ENCODE measurements at regions of chr1 and their contacts with region 1.

Region 1: GRCh38 chr1:107378527-107379270 is 237.9 kb downstream of the NTNG1 start:
- DNase-seq: no peak
- ATAC-seq: no peak
- H3K4me3 ChIP-seq: no peak overlapping the region
- H3K4me3 Mint-ChIP-seq: no peak overlapping the region
- H3K27ac ChIP-seq: no peak overlapping the region
- H3K27ac Mint-ChIP-seq: no peak overlapping the region
- H3K4me1 ChIP-seq: no peaks in the 10 kb centered on the region
- H3K4me1 Mint-ChIP-seq: no peaks in the 10 kb centered on the region
- H3K27me3 ChIP-seq: peaks cover 0 to 3% of the 10 kb centered on the region in 2 experiments
- H3K27me3 Mint-ChIP-seq: peaks cover 3 to 14% of the 10 kb centered on the region in 2 donors

Region 2: DNA sequence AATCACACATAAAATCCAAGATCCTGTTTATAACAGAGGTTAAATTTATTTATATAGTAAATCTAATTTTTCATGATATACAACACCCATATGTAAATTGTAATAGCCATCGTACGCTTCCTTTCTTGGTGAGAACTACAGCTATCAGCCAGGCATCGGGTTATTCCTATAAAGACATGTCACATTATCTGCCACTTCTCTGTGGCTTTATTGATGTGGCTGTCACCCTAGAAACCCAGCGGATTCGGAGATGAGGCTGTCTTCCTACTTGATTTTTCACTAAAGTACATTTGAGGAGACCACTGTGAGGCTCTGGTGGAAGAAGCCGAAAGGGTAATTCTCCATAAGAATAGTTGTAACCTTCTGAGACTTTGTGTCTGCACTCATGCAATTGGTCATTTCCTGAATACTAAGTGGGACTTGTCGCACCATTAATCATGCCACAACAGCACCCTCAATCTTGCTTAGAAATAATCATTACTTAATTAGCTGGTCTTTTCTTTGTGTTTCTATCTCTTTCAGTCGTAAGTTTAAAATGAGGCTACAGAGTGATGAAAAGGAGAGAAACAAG is 131.8 kb before region 1 on chr1:
- CTCF ChIA-PET with region 1: no interaction called
- POLR2A ChIA-PET with region 1: no interaction called
- DNase-seq: no peak
- ATAC-seq: no peak
- H3K4me3 ChIP-seq: no peak overlapping the region
- H3K4me3 Mint-ChIP-seq: no peak overlapping the region
- H3K27ac ChIP-seq: no peak overlapping the region
- H3K27ac Mint-ChIP-seq: no peak overlapping the region
- H3K4me1 ChIP-seq: peaks cover 0 to 7% of the 10 kb centered on the region in 2 experiments
- H3K4me1 Mint-ChIP-seq: peaks cover 0 to 6% (median 2%) of the 10 kb centered on the region in 3 donors
- H3K27me3 ChIP-seq: peaks cover 0 to 5% of the 10 kb centered on the region in 2 experiments
- H3K27me3 Mint-ChIP-seq: peaks cover 3 to 4% of the 10 kb centered on the region in 2 donors

Region 3: DNA sequence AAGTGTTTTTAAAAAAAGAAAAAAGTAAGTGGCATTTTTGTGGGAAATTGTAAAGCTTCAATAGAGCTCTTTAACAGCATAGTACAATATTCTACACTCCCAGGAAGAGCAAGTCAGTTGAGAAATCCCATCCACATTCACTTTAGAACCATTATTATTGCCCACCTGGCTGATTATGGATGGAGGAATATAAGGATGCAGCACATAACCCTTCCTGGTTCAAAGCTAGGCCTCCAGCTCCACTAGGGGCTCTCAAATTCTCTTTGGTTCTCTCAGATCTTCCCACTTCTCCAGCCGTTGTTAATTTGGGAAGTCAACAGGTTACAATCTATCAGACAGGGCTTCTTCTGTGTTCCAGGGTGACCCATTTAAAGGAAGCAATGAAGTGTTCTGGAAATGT is 39.8 kb before region 1 on chr1:
- CTCF ChIA-PET with region 1: no interaction called
- POLR2A ChIA-PET with region 1: interaction called in 1 of 2 experiments, 13 read pairs
- DNase-seq: no peak
- ATAC-seq: no peak
- H3K4me3 ChIP-seq: no peak overlapping the region
- H3K4me3 Mint-ChIP-seq: no peak overlapping the region
- H3K27ac ChIP-seq: no peak overlapping the region
- H3K27ac Mint-ChIP-seq: no peak overlapping the region
- H3K4me1 ChIP-seq: no peaks in the 10 kb centered on the region
- H3K4me1 Mint-ChIP-seq: no peaks in the 10 kb centered on the region
- H3K27me3 ChIP-seq: no peaks in the 10 kb centered on the region
- H3K27me3 Mint-ChIP-seq: peaks cover 2 to 4% of the 10 kb centered on the region in 2 donors

Region 4: DNA sequence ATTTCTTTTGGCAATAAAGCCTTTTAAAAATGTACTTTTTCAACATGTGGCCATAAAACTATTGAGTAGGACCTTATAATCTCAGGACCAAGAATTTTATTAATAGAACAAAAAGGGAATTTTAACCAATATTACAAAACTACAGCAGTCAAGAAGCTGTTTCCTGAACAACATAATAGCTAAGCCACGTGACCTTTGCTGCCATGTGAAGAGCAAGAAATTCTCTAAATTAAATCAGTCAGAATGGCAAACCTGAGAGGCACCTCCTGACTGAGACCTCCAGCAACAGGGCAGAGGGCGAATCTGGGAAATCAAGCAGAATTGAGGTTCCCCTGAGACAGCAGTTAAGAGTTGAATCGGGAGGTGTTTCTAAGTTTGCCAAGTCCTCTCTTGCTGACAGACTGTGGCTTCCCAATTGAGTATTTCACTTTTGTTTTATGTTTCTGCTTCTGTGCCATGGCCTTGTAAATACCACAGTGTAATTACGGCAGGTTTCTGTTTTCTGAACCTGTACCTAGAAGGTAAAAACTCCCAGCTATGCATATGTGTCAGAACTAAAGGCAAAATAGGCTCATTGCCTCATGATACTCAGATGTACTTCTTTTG is 120.5 kb after region 1 on chr1:
- CTCF ChIA-PET with region 1: no interaction called
- POLR2A ChIA-PET with region 1: no interaction called
- DNase-seq: no peak
- ATAC-seq: no peak
- H3K4me3 ChIP-seq: no peak overlapping the region
- H3K4me3 Mint-ChIP-seq: no peak overlapping the region
- H3K27ac ChIP-seq: no peak overlapping the region
- H3K27ac Mint-ChIP-seq: no peak overlapping the region
- H3K4me1 ChIP-seq: no peaks in the 10 kb centered on the region
- H3K4me1 Mint-ChIP-seq: peaks cover 0 to 2% (median 0%) of the 10 kb centered on the region in 3 donors
- H3K27me3 ChIP-seq: no peaks in the 10 kb centered on the region
- H3K27me3 Mint-ChIP-seq: no peaks in the 10 kb centered on the region

Measured in T-cell (primary cell).